CD8-positive, alpha-beta T cell (primary cell): ENCODE measurements at regions of chr5 and their contacts with region 1.

Region 1: GRCh38 chr5:132007399-132008165 is 3.9 kb downstream of the ACSL6 start:
- DNase-seq: peak; percentile 51 to 84 (median 79)
- ATAC-seq: peak; percentile 47
- H3K4me3 ChIP-seq: no peak overlapping the region
- H3K4me3 Mint-ChIP-seq: no peak overlapping the region
- H3K27ac ChIP-seq: no peak overlapping the region
- H3K27ac Mint-ChIP-seq: no peak overlapping the region
- H3K4me1 ChIP-seq: peaks cover 11% of the 10 kb centered on the region
- H3K4me1 Mint-ChIP-seq: peaks cover 23% of the 10 kb centered on the region
- H3K27me3 ChIP-seq: peaks cover 0 to 9% of the 10 kb centered on the region in 2 experiments
- H3K27me3 Mint-ChIP-seq: peaks cover 13% of the 10 kb centered on the region
- CTCF ChIP-seq: peak; percentile 67

Region 2: DNA sequence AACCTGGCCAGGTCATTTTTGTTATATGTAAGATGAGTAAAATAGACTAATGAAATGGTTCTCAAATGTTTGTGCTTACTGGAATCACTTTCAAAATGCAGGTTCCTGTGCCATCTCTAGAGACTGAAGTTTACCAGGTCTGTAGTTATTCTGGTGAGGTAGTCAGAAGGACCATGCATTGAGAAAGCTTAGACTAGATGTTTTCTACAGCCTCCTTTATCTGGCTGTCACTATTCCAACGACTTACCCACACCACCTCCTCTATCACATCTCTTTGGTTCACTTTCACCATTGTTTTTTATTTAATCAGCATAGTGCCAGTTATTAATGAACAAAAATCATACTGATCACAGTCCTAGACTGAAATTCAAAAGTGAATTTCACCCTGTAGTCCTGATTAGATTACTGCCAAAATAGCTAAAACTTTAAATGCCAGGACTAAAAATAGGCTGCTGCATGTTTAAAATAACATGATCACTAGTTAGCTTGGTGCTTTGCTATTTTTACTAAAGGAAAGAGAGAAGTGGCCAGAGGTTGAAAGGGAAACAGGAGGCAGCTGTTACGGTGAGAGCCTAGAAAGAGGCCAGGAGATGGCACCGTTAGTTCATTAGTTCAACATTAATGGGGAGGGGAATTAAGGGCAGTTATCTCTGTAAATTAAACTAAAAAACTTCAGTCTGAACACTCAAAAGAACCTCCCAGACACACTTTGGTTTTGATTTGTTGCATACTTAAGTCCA is 196.9 kb before region 1 on chr5:
- CTCF ChIA-PET with region 1: interaction called, 53 read pairs
- POLR2A ChIA-PET with region 1: no interaction called
- intact Hi-C with region 1: loop called (anchors 1 to 2 kb)
- DNase-seq: peak in 2 of 9 experiments; percentile 26 to 43
- ATAC-seq: no peak
- H3K4me3 ChIP-seq: no peak overlapping the region
- H3K4me3 Mint-ChIP-seq: no peak overlapping the region
- H3K27ac ChIP-seq: no peak overlapping the region
- H3K27ac Mint-ChIP-seq: no peak overlapping the region
- H3K4me1 ChIP-seq: no peaks in the 10 kb centered on the region
- H3K4me1 Mint-ChIP-seq: no peaks in the 10 kb centered on the region
- H3K27me3 ChIP-seq: no peaks in the 10 kb centered on the region
- H3K27me3 Mint-ChIP-seq: no peaks in the 10 kb centered on the region
- CTCF ChIP-seq: no peak

Region 3: GRCh38 chr5:131968396-131968954 is 39.1 kb before region 1 on chr5:
- CTCF ChIA-PET with region 1: interaction called, 28 read pairs
- POLR2A ChIA-PET with region 1: no interaction called
- intact Hi-C with region 1: no loop called
- DNase-seq: no peak
- ATAC-seq: no peak
- H3K4me3 ChIP-seq: no peak overlapping the region
- H3K4me3 Mint-ChIP-seq: no peak overlapping the region
- H3K27ac ChIP-seq: no peak overlapping the region
- H3K27ac Mint-ChIP-seq: no peak overlapping the region
- H3K4me1 ChIP-seq: peaks cover 1% of the 10 kb centered on the region
- H3K4me1 Mint-ChIP-seq: peaks cover 30% of the 10 kb centered on the region
- H3K27me3 ChIP-seq: no peaks in the 10 kb centered on the region
- H3K27me3 Mint-ChIP-seq: no peaks in the 10 kb centered on the region
- CTCF ChIP-seq: no peak

Region 4: DNA sequence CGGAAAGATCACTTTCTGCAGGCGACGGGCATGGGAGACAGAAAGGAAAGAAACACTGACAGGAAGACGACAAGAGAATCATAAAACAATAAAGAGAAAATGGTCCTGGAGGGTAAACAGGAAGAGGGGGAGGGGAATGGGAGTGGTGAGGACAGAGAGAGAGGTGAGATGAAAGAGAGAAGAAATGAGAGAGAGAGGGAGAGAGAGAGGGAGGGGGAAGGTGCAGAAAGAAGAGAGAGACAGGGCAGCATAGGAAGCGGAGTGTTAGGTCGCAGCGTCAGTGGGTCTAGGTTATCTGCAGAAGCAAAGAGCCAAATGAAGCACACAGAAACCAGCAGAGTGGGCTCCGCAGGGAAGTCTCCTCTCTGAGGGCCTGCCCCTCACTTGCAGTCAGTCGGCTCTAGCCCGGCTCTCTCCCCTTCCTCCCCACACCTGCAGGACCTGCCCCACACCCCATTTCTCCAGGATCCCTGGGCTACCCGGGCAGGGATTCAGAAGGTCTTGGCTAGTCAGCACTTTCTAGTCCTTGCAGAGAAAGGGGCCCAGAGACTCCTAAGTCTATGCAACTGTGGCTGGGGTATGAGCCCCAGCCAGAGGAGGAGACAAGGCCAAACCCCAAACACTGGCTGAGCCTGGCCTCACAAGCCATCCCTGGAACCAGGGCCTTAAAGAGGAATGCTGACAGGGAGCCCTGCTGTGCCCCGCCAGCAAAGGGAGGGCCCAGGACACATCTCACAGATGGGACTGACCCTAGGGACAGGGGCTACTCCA is 32.4 kb before region 1 on chr5:
- CTCF ChIA-PET with region 1: interaction called, 28 read pairs
- POLR2A ChIA-PET with region 1: no interaction called
- intact Hi-C with region 1: loop called in 1 of 2 experiments (anchors 2 kb)
- DNase-seq: peak in 7 of 9 experiments; percentile 7 to 75 (median 30)
- ATAC-seq: peak; percentile 74
- H3K4me3 ChIP-seq: peak overlapping the region; percentile 22 to 70
- H3K4me3 Mint-ChIP-seq: peak overlapping the region; percentile 84
- H3K27ac ChIP-seq: peak overlapping the region; percentile 49 to 77
- H3K27ac Mint-ChIP-seq: peak overlapping the region; percentile 90
- H3K4me1 ChIP-seq: peaks cover 47% of the 10 kb centered on the region
- H3K4me1 Mint-ChIP-seq: peaks cover 73% of the 10 kb centered on the region
- H3K27me3 ChIP-seq: no peaks in the 10 kb centered on the region
- H3K27me3 Mint-ChIP-seq: no peaks in the 10 kb centered on the region
- CTCF ChIP-seq: no peak

Region 5: DNA sequence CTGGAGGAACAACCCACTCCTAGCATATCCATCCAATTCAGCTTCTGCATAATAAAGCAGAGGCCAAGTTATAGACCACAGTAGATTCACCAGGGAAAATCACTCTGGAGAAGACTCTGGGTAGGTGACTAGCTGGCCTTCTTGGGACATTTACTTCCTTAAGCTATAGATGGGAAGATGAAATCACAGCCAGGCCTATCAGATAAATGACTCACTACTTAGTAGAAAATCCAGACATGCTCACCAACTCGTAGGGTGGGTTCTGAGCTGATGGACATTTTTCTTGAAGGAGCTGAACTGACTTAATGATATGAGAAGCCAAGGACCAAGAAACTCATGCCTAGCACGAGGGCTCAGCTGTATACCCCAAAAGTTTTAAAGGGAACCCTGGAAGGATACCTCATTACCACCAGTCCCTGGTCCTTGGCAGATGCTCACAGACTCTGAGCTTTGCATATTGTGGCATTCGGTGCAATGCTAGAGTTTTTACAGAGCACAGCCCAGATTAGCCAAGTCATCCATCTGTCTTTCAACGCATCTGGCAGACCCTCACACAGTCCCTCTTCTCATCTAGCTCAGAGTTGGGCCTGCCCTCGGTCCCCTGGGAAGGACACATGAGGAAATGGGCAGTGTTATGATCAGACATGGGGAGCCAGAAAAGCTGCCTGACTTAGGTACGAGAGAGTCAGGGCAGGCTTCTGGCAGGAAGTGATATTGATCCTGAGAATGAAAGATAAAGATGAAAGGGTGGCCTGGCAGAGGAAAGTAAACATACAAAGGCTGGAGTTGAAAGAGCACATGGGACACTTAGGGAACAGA is 11.2 kb before region 1 on chr5:
- CTCF ChIA-PET with region 1: interaction called, 12 read pairs
- POLR2A ChIA-PET with region 1: no interaction called
- intact Hi-C with region 1: no loop called
- DNase-seq: no peak
- ATAC-seq: no peak
- H3K4me3 ChIP-seq: no peak overlapping the region
- H3K4me3 Mint-ChIP-seq: no peak overlapping the region
- H3K27ac ChIP-seq: no peak overlapping the region
- H3K27ac Mint-ChIP-seq: no peak overlapping the region
- H3K4me1 ChIP-seq: peaks cover 30% of the 10 kb centered on the region
- H3K4me1 Mint-ChIP-seq: peaks cover 39% of the 10 kb centered on the region
- H3K27me3 ChIP-seq: no peaks in the 10 kb centered on the region
- H3K27me3 Mint-ChIP-seq: no peaks in the 10 kb centered on the region
- CTCF ChIP-seq: no peak